Posterior vena cava (tissue), 2 donors: ENCODE measurements at regions of chr9 and their contacts with region 1.

Region 1: GRCh38 chr9:114121227-114122135 is 22.4 kb upstream of the KIF12 start:
- DNase-seq: peak; percentile 55

Region 2: DNA sequence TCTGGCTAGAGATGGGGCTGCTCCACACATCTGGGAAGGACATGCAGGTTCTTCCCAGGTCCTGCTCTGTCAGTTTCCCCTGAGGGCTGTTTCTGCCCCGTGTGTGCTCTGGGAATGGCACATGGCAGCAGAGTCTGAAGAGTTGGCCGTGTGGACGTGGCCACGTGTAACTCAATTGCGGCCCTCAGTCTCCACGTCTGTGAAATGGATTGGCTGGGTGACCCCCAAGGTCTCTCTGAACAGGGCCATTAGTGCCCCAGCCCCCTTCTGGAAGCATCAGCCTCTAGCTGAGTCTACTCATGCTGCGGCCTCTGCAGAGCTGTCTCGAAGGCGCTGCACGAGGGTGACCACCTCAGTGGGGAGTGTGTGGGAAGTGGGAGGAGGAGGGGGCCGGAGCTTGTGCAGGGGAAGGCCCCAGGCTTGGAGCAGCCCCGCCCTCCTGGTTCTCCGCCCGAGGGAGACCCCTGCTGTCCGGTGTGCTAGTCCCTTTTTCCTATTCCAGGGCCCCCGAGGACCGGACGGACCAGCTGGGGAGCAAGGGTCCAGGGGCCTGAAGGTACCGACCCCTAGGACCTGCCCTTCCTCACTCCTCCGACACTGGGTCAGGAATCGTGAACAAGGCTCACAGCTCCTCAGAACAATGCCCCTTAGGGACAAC is 142.5 kb after region 1 on chr9:
- intact Hi-C with region 1: loop called in 1 of 2 experiments (anchors 1 kb)
- DNase-seq: no peak